PC-9 (cell line): ENCODE measurements at regions of chr9 and their contacts with region 1.

Region 1: GRCh38 chr9:92029553-92029952 is 79.5 kb upstream of the ROR2 start:
- DNase-seq: no peak
- H3K4me3 ChIP-seq: no peak overlapping the region
- H3K27ac ChIP-seq: no peak overlapping the region
- H3K4me1 ChIP-seq: no peaks in the 10 kb centered on the region
- H3K27me3 ChIP-seq: no peaks in the 10 kb centered on the region
- CTCF ChIP-seq: peak; percentile 48

Region 2: DNA sequence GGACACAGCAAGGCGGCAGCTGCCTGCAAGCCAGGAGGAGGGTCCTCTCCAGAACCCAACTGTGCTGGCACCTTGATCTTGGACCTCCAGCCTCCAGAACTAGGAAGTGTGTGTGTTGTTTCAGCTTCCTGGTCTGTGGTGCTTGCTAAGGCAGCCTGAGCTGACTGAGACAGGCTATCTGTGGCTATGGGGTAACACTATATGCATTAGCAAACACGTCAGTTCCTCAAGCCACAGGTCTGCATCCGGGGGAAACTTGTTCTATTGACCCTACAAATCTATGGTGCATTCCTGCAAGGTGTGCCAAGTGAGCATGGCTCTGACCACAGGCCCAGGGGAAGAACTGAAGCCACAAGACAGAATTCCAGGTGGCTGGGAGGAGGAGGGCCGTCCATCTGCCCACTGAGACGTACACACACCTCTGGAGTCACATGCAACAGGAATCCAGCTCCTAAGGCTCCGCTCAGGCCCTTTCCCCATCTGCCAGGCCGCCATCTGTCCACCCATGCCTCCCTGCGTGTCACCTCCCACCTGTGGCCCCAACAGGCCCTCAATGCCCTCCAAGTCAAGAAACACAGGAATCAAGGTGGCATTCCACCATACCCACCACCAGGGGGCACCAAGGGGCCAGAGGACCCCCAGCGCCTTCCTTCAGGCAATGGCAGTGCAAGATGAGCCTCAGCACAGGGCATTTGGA is 254.4 kb before region 1 on chr9:
- CTCF ChIA-PET with region 1: no interaction called
- POLR2A ChIA-PET with region 1: no interaction called
- intact Hi-C with region 1: loop called (anchors 10 kb)
- DNase-seq: peak in 1 of 2 experiments; percentile 50
- H3K4me3 ChIP-seq: no peak overlapping the region
- H3K27ac ChIP-seq: no peak overlapping the region
- H3K4me1 ChIP-seq: no peaks in the 10 kb centered on the region
- H3K27me3 ChIP-seq: peaks cover 85% of the 10 kb centered on the region
- CTCF ChIP-seq: peak; percentile 89

Region 3: DNA sequence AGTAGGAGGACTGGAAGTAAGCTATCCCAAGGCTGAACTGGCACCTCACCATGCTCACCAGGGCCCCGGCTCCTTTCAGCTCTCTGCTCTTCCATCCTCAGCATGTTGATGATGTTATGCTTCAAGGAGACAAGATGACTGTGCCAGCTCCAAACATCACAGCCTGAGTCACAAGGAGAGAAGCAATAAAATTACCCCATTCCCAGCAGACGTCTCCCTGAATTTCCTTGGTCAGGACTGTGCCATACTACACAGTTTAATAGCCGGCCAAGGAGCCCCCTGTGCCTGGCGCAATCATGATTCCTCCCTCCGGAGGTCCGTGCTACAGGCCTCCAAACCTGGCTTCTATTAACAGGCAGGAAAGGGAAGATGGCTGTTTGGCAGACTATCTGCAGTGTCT is 28.3 kb before region 1 on chr9:
- CTCF ChIA-PET with region 1: no interaction called
- POLR2A ChIA-PET with region 1: no interaction called
- intact Hi-C with region 1: no loop called
- DNase-seq: no peak
- H3K4me3 ChIP-seq: no peak overlapping the region
- H3K27ac ChIP-seq: no peak overlapping the region
- H3K4me1 ChIP-seq: no peaks in the 10 kb centered on the region
- H3K27me3 ChIP-seq: peaks cover 66% of the 10 kb centered on the region
- CTCF ChIP-seq: no peak